Activated CD4-positive, alpha-beta T cell treated with anti-CD3 and anti-CD28 coated beads for 36 hours (primary cell): ENCODE measurements at regions of chr5 and their contacts with region 1.

Region 1: GRCh38 chr5:160342403-160342941 is 28.0 kb downstream of the C1QTNF2 start:
- DNase-seq: no peak
- ATAC-seq: no peak
- H3K4me3 Mint-ChIP-seq: no peak overlapping the region
- H3K27ac Mint-ChIP-seq: no peak overlapping the region
- H3K4me1 Mint-ChIP-seq: no peaks in the 10 kb centered on the region
- H3K27me3 Mint-ChIP-seq: no peaks in the 10 kb centered on the region

Region 2: DNA sequence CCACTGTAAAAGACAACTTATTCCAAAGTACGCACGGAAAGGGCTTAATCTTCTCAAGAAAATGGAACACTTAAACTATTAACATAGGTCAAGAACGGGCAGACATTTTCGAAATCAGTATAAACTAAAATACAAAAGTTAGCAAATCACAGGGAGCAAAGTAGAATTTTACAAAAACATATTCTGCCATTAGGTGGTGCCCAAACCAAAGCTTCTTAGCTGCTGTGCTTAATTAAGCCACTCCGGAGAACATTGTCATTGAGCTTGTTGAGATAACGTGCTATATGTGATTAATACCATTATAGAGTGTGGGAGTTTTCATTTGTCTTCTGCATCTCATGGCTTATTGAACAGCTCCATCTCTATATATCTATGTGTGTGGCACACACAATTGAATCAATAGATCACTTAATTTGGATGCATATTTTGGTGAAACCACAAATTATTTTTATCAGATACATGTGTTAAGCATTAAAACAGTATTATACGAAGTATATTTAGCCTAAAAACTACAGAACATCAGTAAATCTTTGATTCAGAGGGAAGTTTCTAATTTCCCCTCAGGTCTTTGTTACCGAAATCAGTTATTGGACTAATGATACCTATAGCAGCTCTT is 1055.9 kb before region 1 on chr5:
- CTCF ChIA-PET with region 1: no interaction called
- POLR2A ChIA-PET with region 1: no interaction called
- intact Hi-C with region 1: loop called in 1 of 2 experiments (anchors 10 kb)
- DNase-seq: no peak
- ATAC-seq: peak; percentile 63
- H3K4me3 Mint-ChIP-seq: no peak overlapping the region
- H3K27ac Mint-ChIP-seq: no peak overlapping the region
- H3K4me1 Mint-ChIP-seq: no peaks in the 10 kb centered on the region
- H3K27me3 Mint-ChIP-seq: no peaks in the 10 kb centered on the region

Region 3: DNA sequence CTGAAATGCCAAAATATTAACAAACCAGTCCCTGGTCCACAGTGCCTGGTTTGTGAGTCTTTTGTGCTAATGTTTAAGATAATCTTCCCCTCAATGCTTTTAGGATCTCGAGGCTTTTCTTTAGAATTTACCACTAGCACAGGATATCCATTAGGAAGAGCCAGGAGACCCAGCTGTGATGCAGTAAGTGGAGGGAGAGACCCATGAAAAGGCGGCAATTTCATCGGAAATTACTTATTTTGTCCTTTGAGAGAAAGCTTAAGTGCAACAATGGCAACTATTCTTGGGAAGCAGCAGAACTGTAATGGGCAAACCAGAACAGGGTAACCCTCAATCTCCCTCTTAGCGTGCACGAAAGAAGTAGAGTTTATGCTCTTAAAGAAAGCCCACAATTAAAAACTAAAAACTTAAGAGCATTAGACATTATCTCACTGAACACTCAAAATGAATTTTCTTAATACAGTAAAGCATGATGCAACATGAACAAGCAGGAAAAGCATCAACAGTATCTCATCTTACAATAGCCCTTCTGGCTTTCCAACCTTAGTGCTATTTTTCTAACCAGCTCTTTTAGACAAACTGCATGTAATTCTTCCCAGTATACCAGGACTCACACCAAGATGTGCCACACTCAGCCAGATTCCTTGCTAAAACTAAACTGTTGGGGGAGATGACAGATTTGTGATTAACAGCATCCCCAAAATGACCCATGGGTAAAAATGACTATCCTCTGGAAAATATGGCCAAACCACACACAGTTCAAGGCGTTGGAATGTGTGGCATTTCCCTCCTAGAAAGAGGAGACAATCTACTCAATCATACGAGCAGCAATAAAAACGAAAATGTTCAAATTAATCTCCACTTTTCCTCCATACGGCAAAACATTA is 259.6 kb before region 1 on chr5:
- CTCF ChIA-PET with region 1: interaction called, 7 read pairs
- POLR2A ChIA-PET with region 1: no interaction called
- intact Hi-C with region 1: loop called in 1 of 2 experiments (anchors 5 kb)
- DNase-seq: no peak
- ATAC-seq: no peak
- H3K4me3 Mint-ChIP-seq: no peak overlapping the region
- H3K27ac Mint-ChIP-seq: no peak overlapping the region
- H3K4me1 Mint-ChIP-seq: no peaks in the 10 kb centered on the region
- H3K27me3 Mint-ChIP-seq: no peaks in the 10 kb centered on the region

Region 4: DNA sequence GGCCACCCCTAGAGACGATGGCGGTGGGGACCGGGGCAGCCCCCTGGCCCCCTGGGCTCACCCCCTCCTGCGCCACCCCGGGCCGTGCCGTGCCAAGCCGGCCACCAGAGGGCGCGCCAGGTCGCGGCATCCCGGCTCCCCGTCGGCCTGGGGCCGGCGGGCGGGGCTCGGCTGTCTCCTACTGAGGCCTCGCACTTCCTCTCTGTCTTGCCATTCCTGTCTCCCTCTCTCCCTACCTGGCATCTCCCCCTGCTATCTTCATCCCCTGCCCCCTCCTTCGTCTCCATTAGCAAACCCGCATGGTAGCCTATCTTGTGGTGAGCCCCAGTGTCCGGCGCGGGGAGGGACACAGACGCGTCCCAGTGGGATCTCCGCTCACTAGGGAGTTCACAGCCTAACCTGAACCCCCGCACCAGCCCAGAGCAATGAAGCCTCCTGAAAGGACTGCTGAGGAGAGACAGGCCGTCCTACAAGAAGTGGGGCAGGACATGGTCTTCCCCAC is 143.0 kb before region 1 on chr5:
- CTCF ChIA-PET with region 1: interaction called, 21 read pairs
- POLR2A ChIA-PET with region 1: no interaction called
- intact Hi-C with region 1: loop called (anchors 1 kb)
- DNase-seq: peak; percentile 88
- ATAC-seq: peak; percentile 99
- H3K4me3 Mint-ChIP-seq: peak overlapping the region; percentile 57
- H3K27ac Mint-ChIP-seq: no peak overlapping the region
- H3K4me1 Mint-ChIP-seq: peaks cover 9% of the 10 kb centered on the region
- H3K27me3 Mint-ChIP-seq: peaks cover 8% of the 10 kb centered on the region

Region 5: DNA sequence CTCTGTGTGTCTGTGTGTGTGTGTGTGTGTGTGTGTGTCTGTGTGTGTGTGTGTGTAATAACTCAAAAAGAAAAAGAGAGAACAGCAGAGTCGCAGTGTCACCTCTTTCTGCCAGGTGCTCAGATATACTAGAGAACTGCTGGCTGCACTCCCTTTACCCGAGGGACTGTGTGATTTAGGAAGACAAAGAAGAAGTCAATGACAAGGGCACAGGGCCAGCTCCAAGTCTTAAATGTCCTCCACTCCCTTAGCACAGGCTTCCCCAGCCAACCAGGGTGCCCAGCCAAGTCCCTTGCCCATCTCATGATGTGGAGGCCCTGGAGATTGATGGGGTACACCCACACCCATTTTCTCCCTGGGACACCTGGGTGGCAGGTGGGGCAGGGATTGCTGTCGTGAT is 38.8 kb before region 1 on chr5:
- CTCF ChIA-PET with region 1: no interaction called
- POLR2A ChIA-PET with region 1: no interaction called
- intact Hi-C with region 1: no loop called
- DNase-seq: no peak
- ATAC-seq: no peak
- H3K4me3 Mint-ChIP-seq: no peak overlapping the region
- H3K27ac Mint-ChIP-seq: no peak overlapping the region
- H3K4me1 Mint-ChIP-seq: no peaks in the 10 kb centered on the region
- H3K27me3 Mint-ChIP-seq: peaks cover 9% of the 10 kb centered on the region

Region 6: GRCh38 chr5:160390787-160391696 is 48.6 kb after region 1 on chr5:
- CTCF ChIA-PET with region 1: interaction called, 5 read pairs
- POLR2A ChIA-PET with region 1: no interaction called
- intact Hi-C with region 1: loop called in 1 of 2 experiments (anchors 2 kb)
- DNase-seq: no peak
- ATAC-seq: no peak
- H3K4me3 Mint-ChIP-seq: no peak overlapping the region
- H3K27ac Mint-ChIP-seq: no peak overlapping the region
- H3K4me1 Mint-ChIP-seq: no peaks in the 10 kb centered on the region
- H3K27me3 Mint-ChIP-seq: no peaks in the 10 kb centered on the region